BJ (cell line): ENCODE measurements at regions of chr19 and their contacts with region 1.

Region 1: GRCh38 chr19:16076154-16076957 is at the start of gene TPM4:
- DNase-seq: peak; percentile 72
- H3K4me3 ChIP-seq: peak within 1 kb of the TSS; percentile 95
- H3K27me3 ChIP-seq: no peaks in the 10 kb centered on the region
- CTCF ChIP-seq: no peak
- polyA plus RNA-seq, gene TPM4: 942 and 1,247 TPM in 2 replicates

Region 2: DNA sequence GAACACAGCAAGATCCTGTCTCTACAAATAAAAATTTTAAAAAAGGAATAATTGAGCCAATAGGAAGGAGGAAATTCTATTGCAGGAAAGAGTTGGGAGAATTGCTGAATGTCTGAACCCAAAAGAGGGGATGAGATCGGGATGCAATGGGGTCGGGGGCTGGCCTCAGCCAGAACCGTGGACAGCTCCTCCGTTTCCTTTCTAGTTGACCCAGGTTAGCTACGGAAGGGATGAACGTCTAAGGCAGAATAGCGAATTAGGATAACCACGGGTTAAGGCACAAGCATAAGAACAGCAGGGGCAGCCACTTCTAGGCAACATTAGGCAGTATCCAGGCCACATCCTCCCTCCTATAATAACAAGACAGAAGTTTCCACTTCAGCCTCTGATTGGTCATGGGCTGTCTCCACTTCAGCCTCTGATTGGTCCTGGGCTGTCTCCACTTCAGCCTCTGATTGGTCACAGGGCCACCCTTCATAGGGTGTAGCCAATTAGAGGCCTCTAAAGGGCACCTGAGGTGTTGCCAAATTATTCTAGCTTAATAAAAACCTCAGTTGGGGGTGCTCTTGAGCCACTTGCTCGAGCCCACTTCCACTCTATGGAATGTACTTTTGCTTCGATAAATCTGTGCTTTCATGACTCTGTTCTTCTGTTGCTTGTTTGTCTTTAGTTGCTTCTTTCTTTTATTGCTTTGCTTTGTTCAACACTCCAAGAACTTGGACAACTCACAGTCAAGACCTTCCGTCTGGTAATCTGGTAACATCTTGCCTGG is 24.9 kb before region 1 on chr19:
- CTCF ChIA-PET with region 1: no interaction called
- POLR2A ChIA-PET with region 1: interaction called, 20 read pairs
- DNase-seq: no peak
- H3K4me3 ChIP-seq: no peak overlapping the region
- H3K27me3 ChIP-seq: peaks cover 1% of the 10 kb centered on the region; the same call in 1 of the 2 replicates
- CTCF ChIP-seq: no peak

Region 3: GRCh38 chr19:16062789-16063188 is 13.6 kb before region 1 on chr19:
- CTCF ChIA-PET with region 1: interaction called, 48 read pairs
- POLR2A ChIA-PET with region 1: interaction called, 3 read pairs
- DNase-seq: no peak
- H3K4me3 ChIP-seq: no peak overlapping the region
- H3K27me3 ChIP-seq: no peaks in the 10 kb centered on the region
- CTCF ChIP-seq: peak; percentile 94

Region 4: GRCh38 chr19:16185123-16185767 is 108.9 kb after region 1 on chr19 and contains the start of gene FAM32A:
- CTCF ChIA-PET with region 1: interaction called, 3 read pairs
- POLR2A ChIA-PET with region 1: interaction called, 11 read pairs
- DNase-seq: peak; percentile 96
- H3K4me3 ChIP-seq: peak within 1 kb of the TSS; percentile 55
- H3K27me3 ChIP-seq: no peaks in the 10 kb centered on the region
- CTCF ChIP-seq: peak; percentile 25; the same call in 1 of the 2 replicates
- polyA plus RNA-seq, gene FAM32A: 140 and 156 TPM in 2 replicates